ENCODE measurements at regions of chr19 and their contacts with region 1.

Region 1: DNA sequence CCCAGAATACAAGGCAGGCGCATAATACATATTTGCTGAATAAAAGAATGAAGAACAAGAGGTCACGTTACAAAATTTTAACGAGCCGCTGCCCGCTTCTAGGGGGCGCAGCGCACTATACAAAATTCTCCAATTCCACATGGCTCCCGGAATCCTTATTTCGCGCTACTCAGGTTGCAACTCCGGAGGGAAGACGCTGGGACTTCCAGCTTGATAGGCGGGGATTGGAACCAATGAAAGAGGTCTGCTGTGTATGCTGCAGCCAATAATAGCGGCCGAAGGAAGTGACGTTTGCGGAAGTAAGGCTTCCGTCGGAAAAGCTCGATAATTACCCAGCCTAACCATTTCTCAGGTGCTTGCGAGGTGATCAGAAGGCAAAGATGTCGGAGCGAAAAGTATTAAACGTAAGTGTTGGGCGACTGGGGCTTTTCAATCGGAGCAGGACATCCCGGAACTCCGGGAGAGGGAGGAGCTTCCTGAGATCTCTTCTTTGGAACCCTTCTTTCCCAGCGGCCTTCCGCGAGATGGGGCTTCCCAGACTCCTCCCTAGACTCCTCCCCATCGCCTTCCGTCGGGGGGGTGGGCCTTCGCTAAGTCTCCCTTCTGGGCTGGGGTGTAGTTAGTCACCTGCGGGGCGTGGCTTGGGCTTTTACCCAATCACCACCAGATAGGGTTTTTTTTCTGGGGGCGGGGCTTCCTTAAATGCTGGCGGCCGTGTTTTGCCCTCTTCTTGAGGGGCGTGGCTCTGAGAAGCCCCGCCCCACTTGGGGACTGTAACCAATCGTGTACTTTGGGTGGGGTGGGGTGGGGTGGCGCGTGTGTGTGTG is at the start of gene YJU2:
- DNase-seq: peak; percentile 92 to 100 (median 99)
- ATAC-seq: peak; percentile 96
- H3K4me3 ChIP-seq: peak within 1 kb of the TSS; percentile 100
- H3K4me3 Mint-ChIP-seq: peak within 1 kb of the TSS; percentile 85 to 98 (median 96)
- H3K27ac ChIP-seq: peak within 1 kb of the TSS; percentile 99
- H3K27ac Mint-ChIP-seq: peak within 1 kb of the TSS; percentile 97 to 100 (median 99)
- H3K4me1 ChIP-seq: peaks cover 12 to 13% of the 10 kb centered on the region in 2 donors
- H3K4me1 Mint-ChIP-seq: peaks cover 10 to 33% (median 24%) of the 10 kb centered on the region in 7 donors
- H3K27me3 ChIP-seq: no peaks in the 10 kb centered on the region
- H3K27me3 Mint-ChIP-seq: peaks cover 0 to 2% (median 0%) of the 10 kb centered on the region in 5 donors
- total RNA-seq, gene YJU2: 28.5 to 42.1 (median 31.9) TPM

Region 2: GRCh38 chr19:3801412-3802096 is 445.4 kb before region 1 on chr19:
- CTCF ChIA-PET with region 1: no interaction called
- POLR2A ChIA-PET with region 1: no interaction called
- intact Hi-C with region 1: no loop called
- DNase-seq: peak in 8 of 9 donors; percentile 42 to 70 (median 56)
- ATAC-seq: peak; percentile 81
- H3K4me3 ChIP-seq: peak overlapping the region; percentile 34
- H3K4me3 Mint-ChIP-seq: peak overlapping the region; percentile 56 to 77 (median 73)
- H3K27ac ChIP-seq: no peak overlapping the region
- H3K27ac Mint-ChIP-seq: peak overlapping the region in 4 of 9 donors; percentile 17 to 75 (median 42)
- H3K4me1 ChIP-seq: peaks cover 12 to 32% of the 10 kb centered on the region in 2 donors
- H3K4me1 Mint-ChIP-seq: peaks cover 16 to 51% (median 30%) of the 10 kb centered on the region in 7 donors
- H3K27me3 ChIP-seq: no peaks in the 10 kb centered on the region
- H3K27me3 Mint-ChIP-seq: peaks cover 0 to 7% (median 0%) of the 10 kb centered on the region in 5 donors

Region 3: DNA sequence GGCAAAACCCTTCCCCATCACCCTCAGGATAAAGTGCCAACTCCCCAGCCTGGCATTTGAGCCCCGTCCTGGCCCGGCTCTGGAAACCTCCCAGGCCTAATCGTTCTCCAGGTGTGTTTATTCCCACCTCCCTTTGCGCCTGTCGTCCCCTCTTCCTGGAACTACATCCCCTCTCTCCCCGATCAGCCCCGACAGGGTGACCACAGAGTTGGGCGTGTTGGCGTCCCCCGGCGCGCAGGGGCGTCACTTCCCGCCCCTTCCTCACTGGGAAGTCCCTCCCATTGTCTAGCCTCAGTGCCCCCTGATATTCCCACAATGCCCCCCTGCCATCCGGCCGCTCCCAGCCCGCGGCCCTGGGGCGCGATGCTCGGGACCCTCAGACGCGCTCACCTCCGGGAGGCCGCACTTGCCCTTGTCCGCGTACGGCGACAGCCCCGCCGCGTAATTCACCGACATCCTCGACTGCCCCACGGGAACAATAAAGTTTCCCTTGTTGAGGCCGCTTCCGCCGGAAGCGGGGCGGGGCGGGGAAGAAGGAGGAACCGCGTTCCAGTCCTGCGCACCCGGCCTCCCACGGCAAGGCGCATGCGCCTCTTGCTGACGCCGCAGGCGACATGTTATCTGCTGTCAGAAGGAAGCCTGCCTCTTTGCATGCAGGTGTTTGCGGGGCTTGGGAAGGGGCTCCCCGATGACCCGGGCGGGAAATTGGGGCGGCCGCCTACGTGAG is 64.7 kb before region 1 on chr19 and contains the starts of genes ANKRD24 and SIRT6:
- CTCF ChIA-PET with region 1: no interaction called
- POLR2A ChIA-PET with region 1: no interaction called
- intact Hi-C with region 1: loop called in 1 of 2 experiments (anchors 1 kb)
- DNase-seq: peak; percentile 91 to 97 (median 96)
- ATAC-seq: peak; percentile 90
- H3K4me3 ChIP-seq: peak within 1 kb of the TSS; percentile 90
- H3K4me3 Mint-ChIP-seq: peak within 1 kb of the TSS; percentile 92 to 99 (median 96)
- H3K27ac ChIP-seq: peak within 1 kb of the TSS; percentile 86
- H3K27ac Mint-ChIP-seq: peak within 1 kb of the TSS; percentile 92 to 98 (median 95)
- H3K4me1 ChIP-seq: peaks cover 14 to 15% of the 10 kb centered on the region in 2 donors
- H3K4me1 Mint-ChIP-seq: peaks cover 25 to 44% (median 39%) of the 10 kb centered on the region in 7 donors
- H3K27me3 ChIP-seq: no peaks in the 10 kb centered on the region
- H3K27me3 Mint-ChIP-seq: peaks cover 0 to 2% (median 0%) of the 10 kb centered on the region in 5 donors
- total RNA-seq, gene ANKRD24: 0.75 to 2.8 (median 2.4) TPM
- total RNA-seq, gene SIRT6: 20.0 to 41.2 (median 26.0) TPM

Region 4: DNA sequence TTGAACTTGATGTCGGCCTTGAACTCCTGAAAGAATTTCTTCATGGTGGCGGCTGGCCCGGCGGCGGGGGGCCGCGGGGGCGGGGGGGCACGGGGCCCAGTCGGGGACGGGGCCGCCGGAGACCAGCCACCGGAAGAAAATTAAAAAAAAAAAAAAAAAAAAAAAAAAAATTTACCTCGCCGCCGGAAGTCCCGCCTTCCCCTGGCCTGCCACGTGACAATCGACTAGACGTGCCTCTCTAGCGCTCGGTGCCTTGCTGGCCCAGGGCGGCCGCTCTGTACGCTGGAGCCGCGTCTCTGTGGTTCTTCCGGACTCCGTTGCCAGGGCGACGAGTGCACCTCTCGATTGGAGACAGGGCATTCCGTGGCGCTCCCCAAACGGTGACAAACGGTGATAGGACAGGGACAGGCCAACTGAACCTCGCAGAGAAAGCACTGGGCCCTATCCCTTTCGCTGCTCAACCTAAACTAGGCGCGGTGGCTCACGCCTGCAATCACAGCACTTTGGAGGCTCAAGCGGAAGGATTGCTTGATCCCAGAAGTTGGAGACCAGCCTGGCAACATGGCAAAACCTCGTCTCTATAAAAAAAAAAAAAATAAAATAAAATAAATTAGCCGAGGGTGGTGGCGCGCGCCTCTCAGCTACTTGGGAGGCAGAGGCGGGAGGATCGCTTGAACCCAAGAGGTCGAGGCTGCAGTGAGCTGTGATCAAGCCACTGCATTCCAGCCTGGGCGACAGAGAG is 210.8 kb after region 1 on chr19 and contains the start of gene UBXN6:
- CTCF ChIA-PET with region 1: no interaction called
- POLR2A ChIA-PET with region 1: interaction called, 7 read pairs
- intact Hi-C with region 1: loop called (anchors 1 kb)
- DNase-seq: peak; percentile 92 to 99 (median 96)
- ATAC-seq: peak; percentile 99
- H3K4me3 ChIP-seq: peak within 1 kb of the TSS; percentile 64
- H3K4me3 Mint-ChIP-seq: peak within 1 kb of the TSS; percentile 83 to 98 (median 89)
- H3K27ac ChIP-seq: peak within 1 kb of the TSS; percentile 83
- H3K27ac Mint-ChIP-seq: peak within 1 kb of the TSS; percentile 89 to 97 (median 93)
- H3K4me1 ChIP-seq: peaks cover 10% of the 10 kb centered on the region in 2 donors
- H3K4me1 Mint-ChIP-seq: peaks cover 9 to 25% (median 16%) of the 10 kb centered on the region in 7 donors
- H3K27me3 ChIP-seq: no peaks in the 10 kb centered on the region
- H3K27me3 Mint-ChIP-seq: no peaks in the 10 kb centered on the region
- total RNA-seq, gene UBXN6: 49.2 to 68.6 (median 53.1) TPM

Region 5: DNA sequence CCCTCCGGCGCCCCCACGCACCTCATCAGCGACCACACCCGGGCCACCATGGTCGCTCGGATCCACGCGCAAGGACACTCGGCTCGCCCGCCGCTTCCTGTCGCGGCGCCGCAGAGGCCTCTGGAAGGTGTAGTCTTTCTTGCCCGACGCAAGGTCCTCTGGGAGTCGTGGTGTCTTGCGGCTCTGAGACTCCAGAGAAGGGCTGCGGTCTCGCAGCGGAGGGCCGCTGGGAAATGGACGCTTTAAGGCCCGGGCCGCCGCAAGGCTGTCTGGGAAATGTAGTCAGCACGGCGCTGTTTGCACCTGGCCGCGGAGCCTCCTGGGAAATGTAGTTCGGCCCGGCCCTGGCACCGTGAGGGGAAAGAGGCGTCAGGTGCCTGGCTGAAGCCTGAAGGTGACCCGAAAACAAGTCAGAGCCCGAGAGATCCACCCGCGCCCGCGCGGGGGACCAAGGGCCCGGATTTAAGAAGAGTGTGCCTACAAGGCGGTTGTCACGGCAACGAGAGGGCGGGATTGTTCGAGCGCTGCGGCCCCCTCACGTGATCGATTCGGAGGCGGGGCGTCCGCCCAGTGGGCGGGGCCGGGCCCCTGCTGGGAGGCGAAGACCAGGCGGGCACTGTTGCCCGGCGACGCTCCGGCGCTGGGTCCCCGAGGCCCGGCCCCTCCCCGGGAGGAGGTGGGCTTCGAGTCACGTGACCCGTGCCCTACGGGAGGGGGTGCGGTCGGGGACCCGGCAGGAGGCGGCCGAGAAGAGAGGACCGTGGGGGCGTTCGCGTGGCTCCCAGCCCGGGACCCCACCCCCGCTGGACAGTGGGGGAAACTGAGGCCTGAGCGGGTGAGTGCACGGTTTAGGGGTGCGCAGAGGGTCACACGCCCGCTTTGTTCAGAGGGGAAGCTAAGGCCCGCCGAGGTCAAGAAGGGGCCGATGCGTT is 1433.7 kb after region 1 on chr19 and contains the starts of genes HSD11B1L and MICOS13:
- CTCF ChIA-PET with region 1: no interaction called
- POLR2A ChIA-PET with region 1: no interaction called
- intact Hi-C with region 1: loop called in 1 of 2 experiments (anchors 1 kb)
- DNase-seq: peak; percentile 98 to 99 (median 99)
- ATAC-seq: peak; percentile 96
- H3K4me3 ChIP-seq: peak within 1 kb of the TSS; percentile 100
- H3K4me3 Mint-ChIP-seq: peak within 1 kb of the TSS; percentile 85 to 97 (median 94)
- H3K27ac ChIP-seq: peak within 1 kb of the TSS; percentile 98
- H3K27ac Mint-ChIP-seq: peak within 1 kb of the TSS; percentile 94 to 100 (median 97)
- H3K4me1 ChIP-seq: peaks cover 8 to 18% of the 10 kb centered on the region in 2 donors
- H3K4me1 Mint-ChIP-seq: peaks cover 20 to 33% (median 25%) of the 10 kb centered on the region in 7 donors
- H3K27me3 ChIP-seq: no peaks in the 10 kb centered on the region
- H3K27me3 Mint-ChIP-seq: peaks cover 0 to 18% (median 0%) of the 10 kb centered on the region in 5 donors
- total RNA-seq, gene HSD11B1L: 2.8 to 5.2 (median 3.6) TPM
- total RNA-seq, gene MICOS13: 26.1 to 49.3 (median 38.4) TPM

Measured in naive thymus-derived CD4-positive, alpha-beta T cell (primary cell).